Activated CD4-positive, alpha-beta memory T cell treated with anti-CD3 and anti-CD28 coated beads, Interleukin-2, amount 10 ng/mL, durations not matched to agents 7 days and 5 days (primary cell): ENCODE measurements at regions of chr12 and their contacts with region 1.

Region 1: GRCh38 chr12:57111031-57111734 is at the start of gene STAT6:
- DNase-seq: peak; percentile 91
- H3K4me3 Mint-ChIP-seq: peak within 1 kb of the TSS; percentile 92
- H3K27ac Mint-ChIP-seq: peak within 1 kb of the TSS; percentile 92
- H3K4me1 Mint-ChIP-seq: peaks cover 42% of the 10 kb centered on the region
- H3K27me3 Mint-ChIP-seq: peaks cover 4% of the 10 kb centered on the region
- total RNA-seq, gene STAT6: 127 to 128 TPM

Region 2: DNA sequence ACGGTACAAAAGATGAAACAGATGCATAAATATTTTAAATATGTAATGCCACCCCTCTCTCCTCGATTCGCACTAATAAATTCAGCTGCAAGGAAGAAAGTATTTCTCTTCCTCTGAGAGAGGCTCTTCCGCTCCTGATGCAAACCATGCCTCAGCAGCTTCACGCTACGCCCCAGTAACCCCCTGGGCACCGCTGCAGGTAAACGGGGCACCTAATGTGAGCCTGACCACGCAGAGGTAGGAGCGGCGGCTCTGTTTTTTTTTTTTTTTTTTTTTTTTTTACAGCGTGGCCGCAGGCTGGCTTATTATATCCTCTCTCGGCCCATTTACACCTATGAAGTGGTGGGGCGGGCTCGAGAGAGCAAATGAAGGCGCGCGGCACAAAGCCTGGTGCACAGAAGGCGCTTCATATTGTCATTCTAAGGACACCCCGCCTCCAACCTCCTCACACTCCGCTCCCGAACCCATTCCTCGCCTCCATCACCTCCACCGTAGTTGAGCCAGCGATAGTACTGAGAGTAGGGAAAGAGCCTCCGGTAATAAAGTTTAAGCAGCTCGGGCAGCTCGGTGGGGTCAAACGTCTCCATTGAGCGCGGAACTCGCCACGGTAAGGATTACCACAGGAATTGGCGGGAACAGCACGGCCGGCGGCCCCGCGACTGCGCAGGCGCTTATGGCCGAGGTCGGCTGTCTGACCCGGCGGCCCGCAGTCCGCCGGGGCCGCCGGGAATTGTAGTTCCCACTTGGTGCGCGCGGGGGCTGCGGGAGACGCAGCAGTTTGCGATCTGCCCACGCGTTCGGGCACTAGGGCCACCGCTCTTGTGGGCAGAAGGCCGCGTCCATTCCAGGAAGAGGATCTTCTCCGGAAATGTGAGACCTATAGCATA is 359.2 kb before region 1 on chr12 and contains the start of gene PRIM1:
- CTCF ChIA-PET with region 1: interaction called, 8 read pairs
- POLR2A ChIA-PET with region 1: interaction called, 14 read pairs
- DNase-seq: peak; percentile 89
- H3K4me3 Mint-ChIP-seq: peak within 1 kb of the TSS; percentile 99
- H3K27ac Mint-ChIP-seq: peak within 1 kb of the TSS; percentile 97
- H3K4me1 Mint-ChIP-seq: peaks cover 50% of the 10 kb centered on the region
- H3K27me3 Mint-ChIP-seq: no peaks in the 10 kb centered on the region
- total RNA-seq, gene PRIM1: 45.0 to 46.2 TPM

Region 3: GRCh38 chr12:57031138-57031725 is 80.0 kb before region 1 on chr12:
- CTCF ChIA-PET with region 1: interaction called, 10 read pairs
- POLR2A ChIA-PET with region 1: interaction called, 8 read pairs
- DNase-seq: no peak
- H3K4me3 Mint-ChIP-seq: no peak overlapping the region
- H3K27ac Mint-ChIP-seq: no peak overlapping the region
- H3K4me1 Mint-ChIP-seq: peaks cover 23% of the 10 kb centered on the region
- H3K27me3 Mint-ChIP-seq: peaks cover under 1% of the 10 kb centered on the region

Region 4: GRCh38 chr12:57078519-57079404 is 32.4 kb before region 1 on chr12 and contains the start of gene NEMP1:
- CTCF ChIA-PET with region 1: interaction called, 230 read pairs
- POLR2A ChIA-PET with region 1: interaction called, 200 read pairs
- DNase-seq: peak; percentile 97
- H3K4me3 Mint-ChIP-seq: peak within 1 kb of the TSS; percentile 97
- H3K27ac Mint-ChIP-seq: peak within 1 kb of the TSS; percentile 97
- H3K4me1 Mint-ChIP-seq: peaks cover 35% of the 10 kb centered on the region
- H3K27me3 Mint-ChIP-seq: no peaks in the 10 kb centered on the region
- total RNA-seq, gene NEMP1: 51.7 to 59.2 TPM

Region 5: GRCh38 chr12:57182921-57183790 is 72.0 kb after region 1 on chr12:
- CTCF ChIA-PET with region 1: interaction called, 12 read pairs
- POLR2A ChIA-PET with region 1: interaction called, 10 read pairs
- DNase-seq: peak; percentile 80
- H3K4me3 Mint-ChIP-seq: no peak overlapping the region
- H3K27ac Mint-ChIP-seq: no peak overlapping the region
- H3K4me1 Mint-ChIP-seq: peaks cover 3% of the 10 kb centered on the region
- H3K27me3 Mint-ChIP-seq: no peaks in the 10 kb centered on the region